ENCODE measurements at regions of chr5 and their contacts with region 1.

Region 1: GRCh38 chr5:42811591-42812446 is at the start of gene SELENOP:
- DNase-seq: peak; percentile 66
- H3K4me3 Mint-ChIP-seq: peak within 1 kb of the TSS; percentile 83
- H3K27ac Mint-ChIP-seq: peak within 1 kb of the TSS; percentile 86
- H3K4me1 Mint-ChIP-seq: peaks cover 18% of the 10 kb centered on the region
- H3K27me3 Mint-ChIP-seq: no peaks in the 10 kb centered on the region
- CTCF ChIP-seq: no peak
- total RNA-seq, gene SELENOP: 5.8 and 8.3 TPM in 2 replicates

Region 2: DNA sequence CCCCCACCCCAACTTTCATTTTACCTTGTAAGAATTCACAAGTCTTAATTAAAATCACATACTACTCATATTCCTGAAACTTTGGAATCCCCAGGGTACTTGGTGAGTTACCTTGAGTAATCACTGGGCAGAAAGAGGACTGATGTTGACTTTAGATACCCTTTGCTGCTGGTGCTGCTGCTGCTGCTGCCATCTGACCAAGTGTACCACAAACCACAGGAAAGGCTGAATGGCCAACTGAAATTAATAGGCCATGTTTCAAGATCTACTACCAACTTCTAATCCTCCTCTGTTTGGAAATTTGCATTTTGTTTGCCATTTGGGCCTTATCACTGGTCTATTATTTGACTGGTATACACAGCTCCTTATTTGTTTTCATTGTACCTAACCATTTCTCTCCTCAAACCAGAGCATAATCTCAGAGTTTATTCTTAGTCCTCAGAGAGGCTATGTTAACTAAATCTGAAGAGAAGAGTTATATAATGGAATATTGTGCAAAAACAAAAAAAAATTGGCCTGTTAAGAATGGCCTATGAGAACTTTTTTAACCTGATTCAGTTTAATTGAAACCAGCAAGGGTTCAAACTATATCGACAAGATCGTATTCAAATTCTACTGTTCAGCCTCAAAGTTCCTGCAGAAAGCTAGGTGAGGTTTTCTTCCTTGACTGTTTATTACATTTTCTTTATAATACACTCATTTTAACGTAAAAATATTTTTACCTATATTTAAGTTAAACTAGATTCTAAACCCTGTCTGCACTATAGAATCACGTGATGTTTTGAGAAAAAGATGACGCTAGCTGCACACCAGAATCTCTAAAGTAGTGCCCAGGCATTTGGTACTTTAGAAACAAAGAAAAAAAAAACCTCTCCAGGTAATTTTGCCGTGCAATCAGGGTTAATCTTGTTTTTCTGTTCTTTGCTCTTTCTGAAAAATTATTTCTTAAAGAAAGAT is 13.3 kb before region 1 on chr5:
- CTCF ChIA-PET with region 1: interaction called, 7 read pairs
- POLR2A ChIA-PET with region 1: interaction called, 45 read pairs
- intact Hi-C with region 1: no loop called
- DNase-seq: no peak
- H3K4me3 Mint-ChIP-seq: no peak overlapping the region
- H3K27ac Mint-ChIP-seq: no peak overlapping the region
- H3K4me1 Mint-ChIP-seq: no peaks in the 10 kb centered on the region
- H3K27me3 Mint-ChIP-seq: no peaks in the 10 kb centered on the region
- CTCF ChIP-seq: no peak

Region 3: GRCh38 chr5:42825422-42826148 is 13.8 kb after region 1 on chr5:
- CTCF ChIA-PET with region 1: interaction called, 4 read pairs
- POLR2A ChIA-PET with region 1: interaction called, 14 read pairs
- intact Hi-C with region 1: no loop called
- DNase-seq: no peak
- H3K4me3 Mint-ChIP-seq: no peak overlapping the region
- H3K27ac Mint-ChIP-seq: no peak overlapping the region
- H3K4me1 Mint-ChIP-seq: no peaks in the 10 kb centered on the region
- H3K27me3 Mint-ChIP-seq: no peaks in the 10 kb centered on the region
- CTCF ChIP-seq: no peak

Region 4: DNA sequence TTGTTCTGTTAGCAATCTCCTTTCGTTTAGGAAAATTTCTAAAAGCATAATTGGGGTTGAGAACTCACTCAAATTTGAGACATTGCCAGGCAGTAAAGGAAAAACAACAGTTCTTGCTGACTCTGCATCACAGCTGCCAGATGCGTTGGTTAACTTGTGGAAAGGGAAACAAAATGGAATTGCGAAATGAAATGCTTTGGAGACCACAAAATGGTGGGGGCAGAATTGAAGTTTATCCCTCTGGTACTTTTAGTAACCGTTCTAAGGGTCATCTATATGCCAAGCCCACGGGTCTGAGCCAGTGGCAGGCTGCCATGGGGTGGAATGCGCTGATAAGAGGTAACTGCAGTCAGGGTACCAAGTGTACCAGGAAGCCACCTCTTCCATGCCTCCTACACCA is 28.4 kb after region 1 on chr5:
- CTCF ChIA-PET with region 1: interaction called, 3 read pairs
- POLR2A ChIA-PET with region 1: interaction called, 61 read pairs
- intact Hi-C with region 1: no loop called
- DNase-seq: peak; percentile 88
- H3K4me3 Mint-ChIP-seq: peak overlapping the region; percentile 35
- H3K27ac Mint-ChIP-seq: peak overlapping the region; percentile 81
- H3K4me1 Mint-ChIP-seq: peaks cover 27% of the 10 kb centered on the region
- H3K27me3 Mint-ChIP-seq: no peaks in the 10 kb centered on the region
- CTCF ChIP-seq: no peak

Region 5: DNA sequence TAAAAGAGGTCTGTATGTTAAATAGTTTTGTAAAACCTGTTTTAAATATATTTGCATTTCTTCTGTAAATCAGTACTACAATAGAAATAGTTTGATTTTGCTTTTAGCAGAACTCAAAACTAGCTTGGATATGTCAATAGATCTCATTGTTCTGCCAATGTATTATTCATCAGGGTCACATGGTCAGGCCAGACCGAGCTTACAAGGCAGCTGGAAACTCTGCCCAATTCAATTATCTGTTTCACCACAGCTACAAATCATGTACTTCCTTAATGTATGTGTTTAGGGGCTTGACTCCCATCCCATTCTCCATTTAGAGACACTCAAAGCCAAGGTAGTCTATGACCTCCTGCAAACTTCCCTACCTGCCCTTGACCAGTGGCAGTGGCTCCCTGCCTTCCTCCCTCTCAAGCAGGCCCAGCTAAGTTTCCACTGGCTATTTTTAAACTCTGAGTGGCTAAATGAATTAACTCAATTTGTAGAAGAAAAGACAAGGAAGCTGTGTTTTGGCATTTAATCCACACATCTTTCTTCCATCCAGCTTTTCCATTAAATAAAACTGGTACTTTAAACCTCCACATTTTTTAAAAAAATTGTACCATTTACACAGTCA is 46.3 kb after region 1 on chr5:
- CTCF ChIA-PET with region 1: no interaction called
- POLR2A ChIA-PET with region 1: interaction called, 30 read pairs
- intact Hi-C with region 1: no loop called
- DNase-seq: peak; percentile 24
- H3K4me3 Mint-ChIP-seq: peak overlapping the region; percentile 21
- H3K27ac Mint-ChIP-seq: peak overlapping the region; percentile 89
- H3K4me1 Mint-ChIP-seq: peaks cover 13% of the 10 kb centered on the region
- H3K27me3 Mint-ChIP-seq: no peaks in the 10 kb centered on the region
- CTCF ChIP-seq: no peak